ENCODE measurements at regions of chr1 and their contacts with region 1.

Region 1: DNA sequence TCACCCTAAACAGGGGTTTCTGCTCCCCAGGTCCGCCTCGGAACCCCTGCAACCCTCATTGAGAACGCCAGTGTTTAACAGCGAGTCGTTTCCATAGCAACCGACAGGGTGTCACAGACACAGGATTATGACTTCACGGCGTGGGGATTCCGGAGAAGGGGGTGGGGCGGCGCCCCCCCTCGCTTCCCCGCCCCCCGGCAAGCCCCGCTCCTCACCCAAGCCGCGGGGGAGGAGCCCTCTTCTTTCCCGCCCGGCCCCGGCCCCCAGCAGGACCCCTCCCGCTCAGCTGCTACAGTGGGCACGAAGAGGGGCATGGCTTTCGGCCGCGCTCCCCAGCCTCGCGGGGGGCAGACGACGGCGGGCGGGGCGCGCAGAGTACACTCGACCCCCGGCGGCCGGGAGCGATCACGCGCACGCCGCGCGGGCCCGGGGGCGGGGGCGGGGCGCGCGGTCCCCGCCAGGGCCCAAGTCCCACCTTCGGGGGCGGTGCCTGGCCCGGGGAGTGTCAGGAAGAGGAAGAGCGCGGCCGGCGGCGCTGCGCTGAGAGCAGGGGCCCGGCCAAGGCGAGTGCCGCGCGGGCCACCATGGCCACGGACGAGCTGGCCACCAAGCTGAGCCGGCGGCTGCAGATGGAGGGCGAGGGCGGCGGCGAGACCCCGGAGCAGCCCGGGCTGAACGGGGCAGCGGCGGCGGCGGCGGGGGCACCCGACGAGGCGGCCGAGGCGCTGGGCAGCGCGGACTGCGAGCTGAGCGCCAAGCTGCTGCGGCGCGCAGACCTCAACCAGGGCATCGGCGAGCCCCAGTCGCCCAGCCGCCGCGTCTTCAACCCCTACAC is at the start of gene EFHD2:
- DNase-seq: peak; percentile 74 to 87 (median 78)
- H3K4me3 ChIP-seq: peak within 1 kb of the TSS; percentile 42 to 87 (median 80)
- H3K27ac ChIP-seq: peak within 1 kb of the TSS in 4 of 5 donors; percentile 8 to 77 (median 74)
- H3K4me1 ChIP-seq: peaks cover 27 to 32% of the 10 kb centered on the region in 2 donors
- H3K27me3 ChIP-seq: no peaks in the 10 kb centered on the region
- CTCF ChIP-seq: no peak
- POLR2A ChIP-seq: peak; percentile 73 to 86
- total RNA-seq, gene EFHD2: 67.2 to 113 (median 85.6) TPM

Region 2: DNA sequence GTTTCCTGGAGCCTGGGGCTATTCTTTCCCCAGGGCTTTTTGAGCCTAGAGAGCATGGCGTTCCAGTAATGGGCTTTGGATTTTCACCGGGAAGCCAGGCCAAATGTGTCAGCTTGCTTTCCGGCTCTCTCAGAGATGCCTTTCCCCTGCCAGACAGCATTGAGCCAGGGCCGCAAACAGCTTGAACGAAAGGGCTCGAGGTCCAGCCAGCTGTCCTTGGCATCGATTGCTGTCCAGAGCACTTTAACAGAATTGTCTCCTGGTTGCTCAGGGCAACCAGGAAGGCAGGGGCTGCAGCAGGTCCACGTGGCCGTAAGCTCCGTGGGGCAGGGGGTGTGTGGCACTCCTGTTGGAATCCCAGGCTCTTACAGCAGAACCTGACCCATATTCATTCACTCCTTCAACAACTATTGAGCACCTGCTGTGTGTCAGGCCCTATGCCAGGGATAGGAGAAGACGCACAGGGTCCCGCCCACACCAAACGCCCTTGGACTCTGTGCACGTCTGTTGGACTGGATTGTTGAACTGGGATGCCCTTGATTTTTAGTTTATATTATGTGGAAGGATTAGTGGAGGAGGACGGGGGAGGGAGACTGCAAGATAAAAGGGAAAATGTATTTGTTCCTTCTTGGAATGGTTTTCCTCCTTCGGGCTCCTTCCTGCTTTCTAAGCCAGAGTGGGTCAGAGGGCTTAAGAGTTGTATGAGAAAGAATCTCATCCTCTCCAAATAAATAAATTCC is 38.7 kb before region 1 on chr1:
- intact Hi-C with region 1: loop called in 1 of 2 experiments (anchors 5 kb)
- DNase-seq: peak; percentile 65 to 91 (median 86)
- H3K4me3 ChIP-seq: no peak overlapping the region
- H3K27ac ChIP-seq: peak overlapping the region; percentile 54 to 90 (median 83)
- H3K4me1 ChIP-seq: peaks cover 17 to 25% of the 10 kb centered on the region in 2 donors
- H3K27me3 ChIP-seq: no peaks in the 10 kb centered on the region
- CTCF ChIP-seq: no peak
- POLR2A ChIP-seq: peak in 1 of 2 donors; percentile 20

Region 3: GRCh38 chr1:15485636-15486035 is 76.0 kb after region 1 on chr1:
- intact Hi-C with region 1: no loop called
- DNase-seq: no peak
- H3K4me3 ChIP-seq: no peak overlapping the region
- H3K27ac ChIP-seq: no peak overlapping the region
- H3K4me1 ChIP-seq: no peaks in the 10 kb centered on the region
- H3K27me3 ChIP-seq: no peaks in the 10 kb centered on the region
- CTCF ChIP-seq: no peak
- POLR2A ChIP-seq: no peak

Region 4: DNA sequence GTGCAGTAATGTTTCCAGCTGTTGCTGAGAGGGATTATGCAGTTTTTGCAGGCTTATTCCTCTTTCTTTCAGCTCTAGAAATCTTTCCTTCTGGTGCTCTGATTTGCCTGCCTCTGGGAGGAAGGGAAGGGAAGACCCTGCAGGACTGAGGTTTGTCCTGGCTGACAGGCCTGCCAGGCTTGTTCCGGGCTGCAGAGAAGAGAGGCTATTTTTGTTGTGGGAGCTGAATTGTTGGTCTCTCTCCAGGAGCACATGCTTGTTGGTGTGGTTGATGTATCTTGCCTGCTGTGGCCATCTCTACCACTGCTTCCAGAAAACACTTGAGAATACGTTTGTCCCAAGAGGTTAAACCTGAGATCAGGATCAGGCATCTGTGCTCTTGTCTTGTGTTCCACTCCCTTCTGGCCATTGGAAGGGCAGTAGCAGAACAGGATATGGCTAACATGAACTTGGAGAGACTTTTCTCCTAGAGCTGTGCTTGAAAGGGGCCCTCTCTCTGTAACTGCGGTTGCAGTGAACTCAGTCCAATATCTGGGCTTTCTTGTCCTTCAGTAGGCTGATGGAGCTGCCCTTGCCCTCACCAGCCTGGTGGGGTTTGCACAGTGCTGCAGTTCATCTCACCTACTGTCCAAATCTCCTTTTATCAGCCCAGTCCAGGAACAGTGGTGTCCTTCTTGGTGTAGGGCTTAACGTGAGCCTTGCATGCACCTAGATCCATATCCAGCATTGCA is 305.0 kb after region 1 on chr1:
- intact Hi-C with region 1: no loop called
- DNase-seq: no peak
- H3K4me3 ChIP-seq: no peak overlapping the region
- H3K27ac ChIP-seq: peak overlapping the region in 2 of 5 donors; percentile 21 to 49
- H3K4me1 ChIP-seq: peaks cover 8 to 18% of the 10 kb centered on the region in 2 donors
- H3K27me3 ChIP-seq: no peaks in the 10 kb centered on the region
- CTCF ChIP-seq: no peak
- POLR2A ChIP-seq: no peak